Endothelial cell of umbilical vein (primary cell): ENCODE measurements at regions of chr12 and their contacts with region 1.

Region 1: GRCh38 chr12:57213058-57213715 is 3.4 kb upstream of the NXPH4 start:
- DNase-seq: peak; percentile 82
- H3K4me3 ChIP-seq: no peak overlapping the region
- H3K27ac ChIP-seq: no peak overlapping the region
- H3K4me1 ChIP-seq: peaks cover 2% of the 10 kb centered on the region
- H3K27me3 ChIP-seq: peaks cover 37 to 42% of the 10 kb centered on the region in 2 experiments
- CTCF ChIP-seq: peak; percentile 96 to 98
- POLR2A ChIP-seq: no peak

Region 2: GRCh38 chr12:57135527-57136326 is 77.5 kb before region 1 on chr12:
- CTCF ChIA-PET with region 1: no interaction called
- POLR2A ChIA-PET with region 1: no interaction called
- dilution Hi-C with region 1: no loop called
- intact Hi-C with region 1: no loop called
- DNase-seq: no peak
- H3K4me3 ChIP-seq: no peak overlapping the region
- H3K27ac ChIP-seq: no peak overlapping the region
- H3K4me1 ChIP-seq: no peaks in the 10 kb centered on the region
- H3K27me3 ChIP-seq: peaks cover 28% of the 10 kb centered on the region in 2 experiments
- CTCF ChIP-seq: no peak
- POLR2A ChIP-seq: no peak

Region 3: GRCh38 chr12:57229634-57230380 is 16.6 kb after region 1 on chr12 and contains the start of gene SHMT2:
- CTCF ChIA-PET with region 1: interaction called, 54 read pairs
- POLR2A ChIA-PET with region 1: interaction called, 11 read pairs
- dilution Hi-C with region 1: no loop called
- intact Hi-C with region 1: no loop called
- DNase-seq: peak; percentile 94
- H3K4me3 ChIP-seq: peak within 1 kb of the TSS; percentile 44 to 73 (median 63)
- H3K27ac ChIP-seq: peak within 1 kb of the TSS; percentile 91
- H3K4me1 ChIP-seq: peaks cover 18% of the 10 kb centered on the region
- H3K27me3 ChIP-seq: peaks cover 15 to 18% of the 10 kb centered on the region in 2 experiments
- CTCF ChIP-seq: no peak
- POLR2A ChIP-seq: peak; percentile 70
- total RNA-seq, gene SHMT2: 148 and 155 TPM in 2 replicates

Region 4: GRCh38 chr12:57238854-57239554 is 25.8 kb after region 1 on chr12:
- CTCF ChIA-PET with region 1: interaction called, 214 read pairs
- POLR2A ChIA-PET with region 1: interaction called, 3 read pairs
- dilution Hi-C with region 1: no loop called
- intact Hi-C with region 1: loop called (anchors 1 kb)
- DNase-seq: peak; percentile 86
- H3K4me3 ChIP-seq: peak overlapping the region in 2 of 3 experiments; percentile 3 to 35
- H3K27ac ChIP-seq: no peak overlapping the region
- H3K4me1 ChIP-seq: peaks cover 28% of the 10 kb centered on the region
- H3K27me3 ChIP-seq: peaks cover 55 to 58% of the 10 kb centered on the region in 2 experiments
- CTCF ChIP-seq: peak; percentile 100
- POLR2A ChIP-seq: no peak

Region 5: DNA sequence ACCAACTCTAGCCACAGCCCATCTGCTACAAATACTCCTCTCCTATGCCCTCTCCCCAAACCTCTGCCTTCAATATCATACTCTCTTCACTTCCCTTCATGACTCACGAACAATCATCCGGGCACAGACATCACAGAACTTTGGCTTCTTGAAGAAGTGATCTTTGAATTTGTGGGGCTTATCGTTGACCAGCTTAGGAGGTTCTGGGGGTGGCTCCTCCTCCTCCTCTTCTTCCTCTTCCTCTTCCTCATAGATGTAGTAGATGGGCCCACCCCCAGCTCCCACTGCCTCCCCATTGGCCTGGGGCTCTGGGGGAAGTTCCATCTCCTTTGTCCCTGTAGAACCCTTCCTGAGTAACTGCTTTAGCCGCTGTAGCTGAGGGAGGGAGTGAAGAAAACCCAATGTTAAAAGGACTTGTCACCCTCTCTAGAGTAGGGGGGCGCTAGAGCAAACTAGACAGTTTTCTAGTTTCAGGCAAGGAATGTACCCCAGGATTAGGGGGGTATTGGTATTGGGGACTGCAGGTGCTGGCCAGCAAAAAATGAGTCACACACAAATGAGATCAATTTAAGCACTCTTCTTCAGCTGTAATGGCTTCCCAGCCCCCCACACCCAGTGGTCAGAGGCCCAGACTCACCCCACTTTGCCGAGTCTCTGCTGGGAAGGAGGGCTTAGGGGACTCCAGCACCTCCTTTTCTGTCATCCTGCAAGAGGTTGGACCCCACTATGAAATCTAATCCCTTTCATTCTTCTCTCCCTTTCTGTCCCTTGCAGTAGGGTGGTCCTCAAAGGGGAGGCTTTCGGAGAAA is 36.0 kb after region 1 on chr12:
- CTCF ChIA-PET with region 1: interaction called, 214 read pairs
- POLR2A ChIA-PET with region 1: no interaction called
- dilution Hi-C with region 1: no loop called
- intact Hi-C with region 1: no loop called
- DNase-seq: no peak
- H3K4me3 ChIP-seq: no peak overlapping the region
- H3K27ac ChIP-seq: no peak overlapping the region
- H3K4me1 ChIP-seq: no peaks in the 10 kb centered on the region
- H3K27me3 ChIP-seq: peaks cover 0 to 3% of the 10 kb centered on the region in 2 experiments
- CTCF ChIP-seq: no peak
- POLR2A ChIP-seq: no peak

Region 6: GRCh38 chr12:57418255-57418654 is 205.1 kb after region 1 on chr12:
- CTCF ChIA-PET with region 1: no interaction called
- POLR2A ChIA-PET with region 1: no interaction called
- dilution Hi-C with region 1: no loop called
- intact Hi-C with region 1: no loop called
- DNase-seq: no peak
- H3K4me3 ChIP-seq: no peak overlapping the region
- H3K27ac ChIP-seq: no peak overlapping the region
- H3K4me1 ChIP-seq: no peaks in the 10 kb centered on the region
- H3K27me3 ChIP-seq: no peaks in the 10 kb centered on the region
- CTCF ChIP-seq: no peak
- POLR2A ChIP-seq: no peak